ENCODE measurements at regions of chr5 and their contacts with region 1.

Region 1: DNA sequence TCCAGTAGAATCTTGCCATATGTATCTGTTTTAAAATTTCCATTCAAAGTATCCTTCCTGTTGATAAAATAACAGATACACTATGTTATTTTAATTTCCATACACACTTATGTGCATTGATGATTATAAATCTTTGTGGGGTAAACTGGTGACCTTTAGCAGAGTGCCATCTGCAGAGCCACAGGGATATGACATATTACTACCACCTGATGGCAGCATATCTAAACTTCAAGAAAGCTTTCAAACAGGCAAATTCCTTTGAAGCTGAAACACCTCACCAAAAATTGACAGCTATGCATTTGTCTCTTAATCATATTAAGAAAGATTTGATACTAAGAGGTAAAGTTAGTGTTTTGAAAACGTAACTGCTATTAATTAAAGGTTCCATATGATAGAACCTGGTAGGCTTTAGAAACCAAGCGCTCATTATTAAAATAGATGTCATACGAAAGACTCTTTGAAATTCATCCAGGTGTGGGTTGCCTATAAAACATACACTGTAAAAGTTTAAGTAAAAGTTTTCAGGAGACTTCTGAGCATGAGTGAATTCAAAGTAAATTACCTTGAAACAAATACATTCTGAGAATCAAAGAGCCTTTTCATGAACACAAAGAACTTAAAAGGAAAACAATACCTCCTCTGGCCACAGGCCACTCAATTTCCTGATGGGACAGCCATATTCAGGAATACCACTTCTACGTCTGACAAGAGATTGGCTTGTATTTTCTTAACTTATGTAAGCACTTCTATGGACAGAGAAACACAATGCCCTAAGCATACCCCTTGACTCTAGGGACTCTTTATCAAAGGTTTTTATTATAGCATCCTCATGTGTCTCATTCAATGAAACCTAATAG is 93.3 kb downstream of the KIAA0825 start:
- DNase-seq: peak; percentile 15 to 45 (median 22)
- ATAC-seq: peak; percentile 83
- H3K4me3 ChIP-seq: no peak overlapping the region
- H3K27ac ChIP-seq: no peak overlapping the region
- H3K4me1 ChIP-seq: no peaks in the 10 kb centered on the region
- H3K27me3 ChIP-seq: no peaks in the 10 kb centered on the region
- CTCF ChIP-seq: peak; percentile 35 to 59 (median 57); a peak in 4 of 6 replicates
- EP300 ChIP-seq: no peak
- POLR2A ChIP-seq: no peak
- RAD21 ChIP-seq: peak; percentile 73 to 78

Region 2: GRCh38 chr5:94613583-94613982 is 88.5 kb after region 1 on chr5:
- CTCF ChIA-PET with region 1: no interaction called
- POLR2A ChIA-PET with region 1: no interaction called
- in situ Hi-C with region 1: no loop called
- intact Hi-C with region 1: loop called (anchors 5 kb)
- DNase-seq: peak in 3 of 4 experiments; percentile 16 to 71 (median 39)
- ATAC-seq: peak; percentile 71
- H3K4me3 ChIP-seq: no peak overlapping the region
- H3K27ac ChIP-seq: no peak overlapping the region
- H3K4me1 ChIP-seq: peaks cover 0 to under 1% of the 10 kb centered on the region in 2 experiments; a peak in 2 of 5 replicates
- H3K27me3 ChIP-seq: no peaks in the 10 kb centered on the region
- CTCF ChIP-seq: peak; percentile 39 to 58 (median 56); a peak in 5 of 6 replicates
- EP300 ChIP-seq: no peak
- POLR2A ChIP-seq: no peak
- RAD21 ChIP-seq: peak; percentile 10 to 71; a peak in 2 of 4 replicates

Region 3: DNA sequence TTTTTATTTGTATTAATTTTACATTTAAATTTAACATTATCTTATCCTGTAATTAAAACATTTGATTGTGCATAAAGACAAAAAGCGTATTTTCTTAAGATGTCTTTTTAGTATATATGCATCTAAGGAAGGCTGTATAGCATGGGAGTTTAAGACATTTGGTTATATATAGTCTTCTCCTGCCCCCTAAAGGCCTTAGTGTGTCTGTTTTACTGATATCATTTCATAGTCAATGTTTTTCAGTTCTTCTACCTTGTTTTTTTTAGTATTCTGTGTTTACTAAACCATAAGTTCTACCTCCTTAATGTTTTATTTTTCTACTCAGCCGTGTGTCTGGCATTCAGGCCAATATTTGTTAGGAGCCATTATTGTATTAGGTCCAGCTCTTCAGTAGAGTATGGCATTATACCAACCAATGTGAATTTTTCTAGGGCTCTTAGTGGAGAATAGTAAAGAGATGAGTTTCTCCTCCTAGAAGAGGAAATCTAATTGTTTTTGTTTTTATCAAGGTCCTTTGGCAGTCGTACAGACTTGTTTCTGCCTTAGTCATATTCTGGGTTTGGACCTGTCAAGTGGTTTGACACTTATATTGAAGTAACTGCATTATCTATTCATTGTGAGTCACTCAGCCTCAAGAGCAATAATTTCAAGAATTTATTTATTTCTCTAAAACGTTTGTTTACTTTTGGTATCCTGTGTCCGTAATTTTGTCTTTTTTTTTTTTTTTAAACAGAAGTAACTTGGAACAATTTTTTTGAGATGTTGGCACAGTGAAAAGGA is 168.2 kb after region 1 on chr5:
- CTCF ChIA-PET with region 1: interaction called, 8 read pairs
- POLR2A ChIA-PET with region 1: no interaction called
- in situ Hi-C with region 1: no loop called
- intact Hi-C with region 1: loop called (anchors 2 kb)
- DNase-seq: peak in 1 of 4 experiments; percentile 25
- ATAC-seq: peak; percentile 78
- H3K4me3 ChIP-seq: no peak overlapping the region
- H3K27ac ChIP-seq: no peak overlapping the region
- H3K4me1 ChIP-seq: no peaks in the 10 kb centered on the region
- H3K27me3 ChIP-seq: no peaks in the 10 kb centered on the region
- CTCF ChIP-seq: peak in 2 of 3 experiments; percentile 27 to 57; a peak in 3 of 6 replicates
- EP300 ChIP-seq: no peak
- POLR2A ChIP-seq: no peak
- RAD21 ChIP-seq: peak; percentile 57 to 63

Region 4: DNA sequence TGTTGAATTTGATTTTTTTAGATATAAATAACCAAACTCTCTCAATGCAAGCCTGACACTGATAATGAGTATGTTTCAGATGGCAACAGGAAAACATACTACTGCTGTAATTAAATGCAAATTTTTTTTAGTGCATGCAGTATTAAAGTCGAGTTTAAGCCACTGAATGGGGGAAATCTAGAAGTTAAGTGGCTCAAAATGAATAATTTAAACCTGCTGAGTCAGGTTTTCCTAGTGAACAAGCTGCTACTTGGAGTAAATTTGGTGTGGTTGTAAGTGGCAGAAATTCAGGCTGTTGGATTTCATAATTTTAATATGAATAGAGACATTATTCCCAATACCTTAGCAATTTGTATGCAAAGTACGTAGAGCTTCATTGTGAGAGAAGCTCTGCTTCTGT is 215.2 kb after region 1 on chr5:
- CTCF ChIA-PET with region 1: interaction called, 14 read pairs
- POLR2A ChIA-PET with region 1: no interaction called
- in situ Hi-C with region 1: no loop called
- intact Hi-C with region 1: loop called (anchors 2 kb)
- DNase-seq: no peak
- ATAC-seq: no peak
- H3K4me3 ChIP-seq: no peak overlapping the region
- H3K27ac ChIP-seq: no peak overlapping the region
- H3K4me1 ChIP-seq: peaks cover 0 to 3% of the 10 kb centered on the region in 2 experiments; a peak in 1 of 5 replicates
- H3K27me3 ChIP-seq: no peaks in the 10 kb centered on the region
- CTCF ChIP-seq: no peak
- EP300 ChIP-seq: no peak
- POLR2A ChIP-seq: no peak
- RAD21 ChIP-seq: no peak

Region 5: GRCh38 chr5:94784536-94785510 is 259.8 kb after region 1 on chr5:
- CTCF ChIA-PET with region 1: no interaction called
- POLR2A ChIA-PET with region 1: no interaction called
- in situ Hi-C with region 1: no loop called
- intact Hi-C with region 1: loop called (anchors 5 kb)
- DNase-seq: no peak
- ATAC-seq: 0 out of 3 replicates have a peak, but pooled peaks have one; percentile 45
- H3K4me3 ChIP-seq: no peak overlapping the region
- H3K27ac ChIP-seq: no peak overlapping the region
- H3K4me1 ChIP-seq: peaks cover 0 to 4% of the 10 kb centered on the region in 2 experiments; a peak in 1 of 5 replicates
- H3K27me3 ChIP-seq: no peaks in the 10 kb centered on the region
- CTCF ChIP-seq: peak in 1 of 3 experiments; percentile 60; a peak in 2 of 6 replicates
- EP300 ChIP-seq: no peak
- POLR2A ChIP-seq: no peak
- RAD21 ChIP-seq: peak; percentile 37 to 56; a peak in 3 of 4 replicates

Region 6: GRCh38 chr5:94849821-94850736 is 325.0 kb after region 1 on chr5:
- CTCF ChIA-PET with region 1: interaction called, 3 read pairs
- POLR2A ChIA-PET with region 1: no interaction called
- in situ Hi-C with region 1: no loop called
- intact Hi-C with region 1: loop called (anchors 2 kb)
- DNase-seq: peak; percentile 9 to 47 (median 20)
- ATAC-seq: peak; percentile 85
- H3K4me3 ChIP-seq: no peak overlapping the region
- H3K27ac ChIP-seq: no peak overlapping the region
- H3K4me1 ChIP-seq: no peaks in the 10 kb centered on the region
- H3K27me3 ChIP-seq: no peaks in the 10 kb centered on the region
- CTCF ChIP-seq: peak; percentile 57 to 83 (median 75)
- EP300 ChIP-seq: no peak
- POLR2A ChIP-seq: no peak
- RAD21 ChIP-seq: peak; percentile 80 to 85

Measured in K562 (cell line).